Activated B cell treated with CpG ODN at 0.5 μM for 24 hours (primary cell): ENCODE measurements at regions of chr7 and their contacts with region 1.

Region 1: GRCh38 chr7:151057989-151058780 is 488 bp upstream of the CDK5 start:
- DNase-seq: peak; percentile 91
- ATAC-seq: peak; percentile 93
- H3K4me3 Mint-ChIP-seq: peak overlapping the region; percentile 92
- H3K27ac Mint-ChIP-seq: peak overlapping the region; percentile 89
- H3K4me1 Mint-ChIP-seq: peaks cover 36% of the 10 kb centered on the region
- H3K27me3 Mint-ChIP-seq: no peaks in the 10 kb centered on the region
- CTCF ChIP-seq: no peak

Region 2: DNA sequence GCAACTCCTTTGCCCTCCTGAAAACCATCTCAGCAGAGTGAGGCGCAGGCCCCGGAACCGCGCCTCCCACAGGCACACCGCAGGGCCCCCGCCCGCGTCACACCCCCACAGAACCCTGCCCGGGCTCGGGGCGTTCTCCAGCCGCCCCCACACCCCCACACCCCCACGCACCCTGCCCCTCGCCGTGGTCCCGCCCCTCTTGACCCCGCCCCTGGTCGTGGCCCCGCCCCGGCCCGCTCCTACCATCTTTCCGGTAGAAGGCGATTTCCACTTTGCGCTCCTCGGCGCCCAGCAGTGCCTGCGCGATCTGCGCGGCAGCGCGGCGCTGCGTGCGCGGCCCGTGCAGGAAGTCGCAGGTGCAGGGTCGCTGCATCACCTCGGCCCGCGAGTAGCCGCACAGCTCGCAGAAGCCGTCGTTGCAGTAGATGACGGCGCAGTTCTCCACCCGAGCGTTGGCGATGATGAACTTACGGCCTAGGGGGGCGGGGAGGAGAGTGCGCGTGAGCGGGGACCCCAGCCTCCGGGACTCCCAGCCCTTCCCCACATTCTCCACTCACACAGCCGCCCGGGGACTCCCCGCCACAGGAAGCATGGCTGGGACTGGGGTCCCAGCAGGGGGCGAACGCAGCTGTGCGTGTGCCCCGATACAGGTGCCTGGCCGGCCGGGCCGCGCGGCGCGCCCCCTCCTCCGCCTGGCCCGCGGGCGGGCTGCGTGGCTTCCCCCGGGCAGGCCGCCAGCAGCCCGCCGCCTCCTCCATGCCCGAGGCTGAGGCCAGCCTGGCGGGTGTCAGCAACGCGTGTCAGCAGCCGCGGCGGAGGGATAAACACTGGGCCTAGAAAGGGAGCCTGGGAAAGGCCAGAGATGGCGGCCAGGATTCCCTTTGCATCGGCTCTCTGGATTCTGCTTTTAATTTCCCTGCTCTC is 83.5 kb before region 1 on chr7:
- CTCF ChIA-PET with region 1: no interaction called
- POLR2A ChIA-PET with region 1: no interaction called
- intact Hi-C with region 1: loop called (anchors 1 kb)
- DNase-seq: peak; percentile 54
- ATAC-seq: peak; percentile 84
- H3K4me3 Mint-ChIP-seq: peak overlapping the region; percentile 85
- H3K27ac Mint-ChIP-seq: no peak overlapping the region
- H3K4me1 Mint-ChIP-seq: peaks cover 41% of the 10 kb centered on the region
- H3K27me3 Mint-ChIP-seq: peaks cover 29% of the 10 kb centered on the region
- CTCF ChIP-seq: no peak

Region 3: DNA sequence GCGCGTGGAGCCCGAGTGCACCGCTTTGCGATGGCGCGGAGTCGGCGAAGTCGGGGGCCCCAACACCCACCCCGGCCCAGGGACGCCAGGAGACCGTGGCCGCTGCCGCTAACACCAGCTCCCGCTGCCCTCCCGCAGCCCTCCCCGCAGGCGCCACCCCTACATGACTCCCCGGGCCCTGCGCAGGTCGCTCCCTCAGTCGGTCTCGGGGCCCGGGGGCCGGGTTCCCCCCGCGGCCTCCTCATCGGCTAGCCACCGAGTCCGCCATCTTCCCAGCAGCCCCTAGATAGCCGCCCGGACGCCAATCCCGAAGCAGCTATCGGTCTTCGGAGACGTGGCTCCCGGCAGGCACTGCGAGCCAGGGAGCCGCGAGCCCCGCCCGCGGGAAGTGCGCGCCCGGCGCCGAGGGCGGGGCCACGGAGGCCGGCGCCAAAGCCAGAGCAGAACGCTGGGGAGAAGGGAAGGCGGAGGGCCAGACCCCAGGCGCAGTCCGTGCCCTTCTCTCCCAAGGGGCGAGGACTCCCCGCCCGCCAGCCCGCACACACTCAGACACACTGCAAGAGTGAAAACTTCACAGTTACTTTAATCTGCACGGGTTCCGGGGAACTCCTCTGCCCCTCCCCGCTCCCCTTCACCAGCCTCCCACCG is 22.5 kb after region 1 on chr7 and contains the start of gene FASTK:
- CTCF ChIA-PET with region 1: no interaction called
- POLR2A ChIA-PET with region 1: interaction called, 14 read pairs
- intact Hi-C with region 1: loop called (anchors 1 kb)
- DNase-seq: peak; percentile 81
- ATAC-seq: peak; percentile 83
- H3K4me3 Mint-ChIP-seq: peak within 1 kb of the TSS; percentile 91
- H3K27ac Mint-ChIP-seq: peak within 1 kb of the TSS; percentile 70
- H3K4me1 Mint-ChIP-seq: peaks cover 49% of the 10 kb centered on the region
- H3K27me3 Mint-ChIP-seq: peaks cover 8% of the 10 kb centered on the region
- CTCF ChIP-seq: no peak
- total RNA-seq, gene FASTK: 97.6 and 103 TPM in 2 replicates

Region 4: DNA sequence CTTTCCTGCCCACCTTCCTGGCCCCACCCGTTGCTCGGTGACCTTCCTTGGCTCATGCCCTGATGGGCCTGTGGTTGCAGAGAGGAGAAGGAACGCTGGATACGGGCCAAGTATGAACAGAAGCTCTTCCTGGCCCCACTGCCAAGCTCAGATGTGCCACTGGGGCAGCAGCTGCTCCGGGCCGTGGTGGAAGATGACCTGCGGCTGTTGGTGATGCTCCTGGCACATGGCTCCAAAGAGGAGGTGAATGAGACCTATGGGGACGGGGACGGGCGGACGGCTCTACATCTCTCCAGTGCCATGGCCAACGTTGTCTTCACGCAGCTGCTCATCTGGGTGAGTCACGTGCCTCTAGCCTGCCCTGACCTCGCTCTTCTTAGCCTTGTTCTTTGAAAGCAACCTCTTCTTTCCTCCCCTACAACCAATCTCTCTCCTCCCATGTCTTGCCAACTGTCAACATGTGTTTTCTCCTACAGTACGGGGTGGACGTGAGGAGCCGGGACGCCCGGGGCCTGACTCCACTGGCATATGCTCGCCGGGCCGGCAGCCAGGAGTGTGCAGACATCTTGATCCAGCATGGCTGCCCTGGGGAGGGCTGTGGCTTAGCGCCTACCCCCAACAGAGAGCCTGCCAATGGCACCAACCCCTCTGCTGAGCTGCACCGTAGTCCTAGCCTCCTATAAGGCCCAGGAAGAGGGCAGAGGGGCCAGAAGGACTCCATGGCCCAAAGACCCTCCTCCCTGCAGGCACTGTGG is 85.3 kb after region 1 on chr7:
- CTCF ChIA-PET with region 1: no interaction called
- POLR2A ChIA-PET with region 1: no interaction called
- intact Hi-C with region 1: no loop called
- DNase-seq: no peak
- ATAC-seq: no peak
- H3K4me3 Mint-ChIP-seq: no peak overlapping the region
- H3K27ac Mint-ChIP-seq: no peak overlapping the region
- H3K4me1 Mint-ChIP-seq: no peaks in the 10 kb centered on the region
- H3K27me3 Mint-ChIP-seq: no peaks in the 10 kb centered on the region
- CTCF ChIP-seq: no peak

Region 5: GRCh38 chr7:151226875-151227782 is 168.9 kb after region 1 on chr7 and contains the start of gene ABCF2:
- CTCF ChIA-PET with region 1: no interaction called
- POLR2A ChIA-PET with region 1: no interaction called
- intact Hi-C with region 1: loop called (anchors 1 kb)
- DNase-seq: peak; percentile 97
- ATAC-seq: peak; percentile 99
- H3K4me3 Mint-ChIP-seq: peak within 1 kb of the TSS; percentile 99
- H3K27ac Mint-ChIP-seq: peak within 1 kb of the TSS; percentile 91
- H3K4me1 Mint-ChIP-seq: peaks cover 41% of the 10 kb centered on the region
- H3K27me3 Mint-ChIP-seq: no peaks in the 10 kb centered on the region
- CTCF ChIP-seq: no peak
- total RNA-seq, gene ABCF2: 47.3 and 52.4 TPM in 2 replicates

Region 6: GRCh38 chr7:151341357-151342101 is 283.3 kb after region 1 on chr7 and contains the start of gene NUB1:
- CTCF ChIA-PET with region 1: no interaction called
- POLR2A ChIA-PET with region 1: no interaction called
- intact Hi-C with region 1: loop called (anchors 10 kb)
- DNase-seq: peak; percentile 99
- ATAC-seq: peak; percentile 90
- H3K4me3 Mint-ChIP-seq: peak within 1 kb of the TSS; percentile 86
- H3K27ac Mint-ChIP-seq: peak within 1 kb of the TSS; percentile 93
- H3K4me1 Mint-ChIP-seq: peaks cover 52% of the 10 kb centered on the region
- H3K27me3 Mint-ChIP-seq: no peaks in the 10 kb centered on the region
- CTCF ChIP-seq: no peak
- total RNA-seq, gene NUB1: 47.5 and 52.7 TPM in 2 replicates